Activated CD4-positive, alpha-beta memory T cell treated with anti-CD3 and anti-CD28 coated beads for 36 hours (primary cell): ENCODE measurements at regions of chr2 and their contacts with region 1.

Region 1: GRCh38 chr2:10448208-10448645 is at the start of gene ODC1:
- DNase-seq: peak; percentile 95
- H3K4me3 Mint-ChIP-seq: peak within 1 kb of the TSS; percentile 83
- H3K27ac Mint-ChIP-seq: peak within 1 kb of the TSS; percentile 88
- H3K4me1 Mint-ChIP-seq: peaks cover 50% of the 10 kb centered on the region
- H3K27me3 Mint-ChIP-seq: no peaks in the 10 kb centered on the region
- total RNA-seq, gene ODC1: 138 to 142 TPM

Region 2: DNA sequence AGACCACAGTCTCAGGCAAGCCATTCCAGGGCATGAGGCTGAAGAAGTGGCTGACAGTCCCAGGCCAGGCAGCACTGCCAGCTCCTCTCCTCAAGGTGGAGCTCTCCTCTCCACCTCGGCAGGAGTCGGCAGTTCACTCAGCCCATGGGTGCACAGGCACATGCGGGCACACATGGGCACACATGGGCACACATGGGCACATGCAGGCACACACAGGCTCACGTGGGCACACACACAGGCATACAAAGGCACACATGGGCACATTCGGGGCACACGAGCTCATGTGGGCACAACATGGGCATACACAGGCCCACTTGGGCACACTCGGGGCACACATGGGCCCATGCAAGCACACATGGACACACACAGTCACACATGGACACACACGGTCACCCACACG is 670.2 kb before region 1 on chr2:
- CTCF ChIA-PET with region 1: no interaction called
- POLR2A ChIA-PET with region 1: no interaction called
- intact Hi-C with region 1: loop called (anchors 10 kb)
- DNase-seq: peak; percentile 55
- H3K4me3 Mint-ChIP-seq: no peak overlapping the region
- H3K27ac Mint-ChIP-seq: peak overlapping the region; percentile 38
- H3K4me1 Mint-ChIP-seq: peaks cover 47% of the 10 kb centered on the region
- H3K27me3 Mint-ChIP-seq: no peaks in the 10 kb centered on the region

Region 3: DNA sequence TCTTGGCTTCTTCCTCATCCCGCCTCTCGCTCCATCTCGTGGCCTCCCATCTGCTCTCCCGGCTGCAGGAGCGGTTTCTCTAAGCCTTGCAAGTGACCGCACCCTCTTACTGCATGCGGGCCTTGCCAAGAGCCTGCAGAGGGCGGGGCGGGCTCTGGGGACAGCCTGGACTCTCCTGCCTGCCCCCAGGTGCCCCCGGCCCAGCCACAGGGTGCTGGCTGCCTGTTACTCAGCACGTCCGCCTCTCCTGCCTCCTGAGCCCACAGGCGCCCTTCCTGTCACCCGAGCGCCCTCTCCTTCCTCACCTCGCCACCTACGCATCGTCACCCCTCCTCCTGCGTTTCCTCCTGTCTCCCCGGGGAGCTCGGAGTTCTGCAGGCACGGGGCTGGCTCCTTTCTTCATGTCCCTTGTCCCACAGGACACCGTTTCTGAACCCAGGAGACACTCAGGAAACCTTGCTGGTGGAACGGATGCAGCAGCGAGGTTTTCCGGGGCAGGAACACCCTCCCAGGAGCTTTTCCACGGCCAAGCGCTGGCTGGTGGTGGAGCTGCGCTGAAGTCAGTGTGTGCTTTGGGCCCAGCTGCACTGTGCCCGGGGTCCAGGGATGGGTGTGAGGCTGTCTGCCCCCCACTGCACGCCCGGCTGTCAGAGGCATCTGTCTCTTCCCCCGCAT is 117.1 kb before region 1 on chr2:
- CTCF ChIA-PET with region 1: no interaction called
- POLR2A ChIA-PET with region 1: interaction called, 7 read pairs
- intact Hi-C with region 1: loop called (anchors 2 kb)
- DNase-seq: peak; percentile 91
- H3K4me3 Mint-ChIP-seq: peak overlapping the region; percentile 86
- H3K27ac Mint-ChIP-seq: peak overlapping the region; percentile 90
- H3K4me1 Mint-ChIP-seq: peaks cover 76% of the 10 kb centered on the region
- H3K27me3 Mint-ChIP-seq: no peaks in the 10 kb centered on the region

Region 4: DNA sequence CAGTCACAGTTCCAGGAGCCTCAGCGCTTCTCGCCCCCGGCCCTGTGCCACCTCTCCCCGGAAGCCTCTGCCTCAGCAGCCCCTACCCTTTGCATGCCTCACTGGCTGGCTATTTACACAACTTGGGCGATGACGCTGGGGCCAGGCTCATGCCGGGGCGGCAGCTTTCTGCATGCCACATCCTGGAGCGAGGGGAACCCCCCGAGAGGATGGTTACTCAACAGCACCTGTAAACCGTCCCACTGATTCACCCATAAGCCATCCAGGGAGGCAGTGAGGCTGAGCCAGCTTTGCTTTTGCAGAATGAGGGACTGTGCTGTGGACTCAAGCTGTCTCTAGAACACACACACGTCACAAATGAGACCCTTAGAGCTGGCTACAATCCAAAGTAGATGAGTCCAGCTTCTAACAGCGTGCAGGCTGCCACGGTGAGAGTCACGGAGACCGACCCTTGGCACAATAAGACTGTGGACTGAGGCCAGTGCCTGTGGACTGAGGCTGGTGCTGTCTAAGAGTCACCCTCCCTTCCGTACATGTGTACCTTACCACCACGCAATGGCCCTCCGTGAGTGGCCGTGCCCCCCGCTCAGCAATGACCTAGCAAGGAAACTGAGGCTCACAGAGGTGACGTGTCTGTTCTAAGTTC is 45.5 kb after region 1 on chr2:
- CTCF ChIA-PET with region 1: interaction called, 6 read pairs
- POLR2A ChIA-PET with region 1: interaction called, 7 read pairs
- intact Hi-C with region 1: loop called (anchors 1 kb)
- DNase-seq: peak; percentile 96
- H3K4me3 Mint-ChIP-seq: peak overlapping the region; percentile 21
- H3K27ac Mint-ChIP-seq: peak overlapping the region; percentile 83
- H3K4me1 Mint-ChIP-seq: peaks cover 41% of the 10 kb centered on the region
- H3K27me3 Mint-ChIP-seq: peaks cover 10% of the 10 kb centered on the region

Region 5: DNA sequence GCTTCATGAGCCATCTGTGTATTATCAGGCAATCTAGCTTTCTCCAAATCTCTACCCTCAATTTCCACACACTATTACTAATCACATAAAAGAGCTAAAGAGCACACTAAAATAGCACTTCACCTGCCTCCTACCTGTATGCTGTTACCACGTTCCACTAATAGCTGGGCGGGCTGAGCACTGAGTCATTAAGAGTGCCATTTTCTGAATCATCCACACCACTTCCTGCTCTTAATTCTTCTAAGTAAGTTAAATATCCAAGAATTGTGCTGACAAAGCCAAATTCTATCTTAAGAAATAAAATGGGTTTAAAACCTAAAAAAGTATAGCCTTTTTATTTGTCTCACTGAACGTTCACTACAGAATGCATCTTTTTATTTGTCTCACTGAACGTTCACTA is 205.8 kb after region 1 on chr2:
- CTCF ChIA-PET with region 1: interaction called, 3 read pairs
- POLR2A ChIA-PET with region 1: interaction called, 14 read pairs
- intact Hi-C with region 1: loop called (anchors 1 kb)
- DNase-seq: peak; percentile 85
- H3K4me3 Mint-ChIP-seq: no peak overlapping the region
- H3K27ac Mint-ChIP-seq: peak overlapping the region; percentile 80
- H3K4me1 Mint-ChIP-seq: peaks cover 44% of the 10 kb centered on the region
- H3K27me3 Mint-ChIP-seq: no peaks in the 10 kb centered on the region

Region 6: GRCh38 chr2:10790228-10790979 is 342.2 kb after region 1 on chr2:
- CTCF ChIA-PET with region 1: no interaction called
- POLR2A ChIA-PET with region 1: no interaction called
- intact Hi-C with region 1: loop called (anchors 5 kb)
- DNase-seq: peak; percentile 70
- H3K4me3 Mint-ChIP-seq: peak overlapping the region; percentile 54
- H3K27ac Mint-ChIP-seq: peak overlapping the region; percentile 84
- H3K4me1 Mint-ChIP-seq: peaks cover 38% of the 10 kb centered on the region
- H3K27me3 Mint-ChIP-seq: no peaks in the 10 kb centered on the region

Region 7: GRCh38 chr2:11631462-11631861 is 1183.2 kb after region 1 on chr2:
- CTCF ChIA-PET with region 1: no interaction called
- POLR2A ChIA-PET with region 1: no interaction called
- intact Hi-C with region 1: no loop called
- DNase-seq: no peak
- H3K4me3 Mint-ChIP-seq: no peak overlapping the region
- H3K27ac Mint-ChIP-seq: no peak overlapping the region
- H3K4me1 Mint-ChIP-seq: no peaks in the 10 kb centered on the region
- H3K27me3 Mint-ChIP-seq: peaks cover 4% of the 10 kb centered on the region